CD14-positive monocyte (primary cell): ENCODE measurements at regions of chr11 and their contacts with region 1.

Region 1: GRCh38 chr11:47269002-47269828 is 718 bp upstream of the MADD start:
- DNase-seq: peak; percentile 88 to 91 (median 90)
- H3K4me3 ChIP-seq: peak overlapping the region; percentile 63 to 95 (median 80)
- H3K4me3 Mint-ChIP-seq: peak overlapping the region; percentile 83 to 93
- H3K27ac ChIP-seq: peak overlapping the region; percentile 96
- H3K27ac Mint-ChIP-seq: peak overlapping the region; percentile 96 to 100 (median 98)
- H3K4me1 ChIP-seq: peaks cover 53 to 58% of the 10 kb centered on the region in 2 donors
- H3K4me1 Mint-ChIP-seq: peaks cover 55% of the 10 kb centered on the region
- H3K27me3 ChIP-seq: no peaks in the 10 kb centered on the region
- H3K27me3 Mint-ChIP-seq: peaks cover 0 to 3% (median 1%) of the 10 kb centered on the region in 3 donors
- CTCF ChIP-seq: peak; percentile 23

Region 2: GRCh38 chr11:47176328-47177228 is 92.6 kb before region 1 on chr11 and contains the start of gene ARFGAP2:
- intact Hi-C with region 1: loop called (anchors 2 kb)
- DNase-seq: peak; percentile 93 to 96 (median 94)
- H3K4me3 ChIP-seq: peak within 1 kb of the TSS; percentile 77 to 94 (median 93)
- H3K4me3 Mint-ChIP-seq: peak within 1 kb of the TSS; percentile 95 to 98
- H3K27ac ChIP-seq: peak within 1 kb of the TSS; percentile 90 to 95
- H3K27ac Mint-ChIP-seq: peak within 1 kb of the TSS; percentile 96 to 99 (median 98)
- H3K4me1 ChIP-seq: peaks cover 24 to 29% of the 10 kb centered on the region in 2 donors
- H3K4me1 Mint-ChIP-seq: peaks cover 22% of the 10 kb centered on the region
- H3K27me3 ChIP-seq: no peaks in the 10 kb centered on the region
- H3K27me3 Mint-ChIP-seq: peaks cover 0 to 2% (median 1%) of the 10 kb centered on the region in 3 donors
- CTCF ChIP-seq: no peak
- polyA plus RNA-seq, gene ARFGAP2: 59.7 to 129 (median 61.0) TPM

Region 3: DNA sequence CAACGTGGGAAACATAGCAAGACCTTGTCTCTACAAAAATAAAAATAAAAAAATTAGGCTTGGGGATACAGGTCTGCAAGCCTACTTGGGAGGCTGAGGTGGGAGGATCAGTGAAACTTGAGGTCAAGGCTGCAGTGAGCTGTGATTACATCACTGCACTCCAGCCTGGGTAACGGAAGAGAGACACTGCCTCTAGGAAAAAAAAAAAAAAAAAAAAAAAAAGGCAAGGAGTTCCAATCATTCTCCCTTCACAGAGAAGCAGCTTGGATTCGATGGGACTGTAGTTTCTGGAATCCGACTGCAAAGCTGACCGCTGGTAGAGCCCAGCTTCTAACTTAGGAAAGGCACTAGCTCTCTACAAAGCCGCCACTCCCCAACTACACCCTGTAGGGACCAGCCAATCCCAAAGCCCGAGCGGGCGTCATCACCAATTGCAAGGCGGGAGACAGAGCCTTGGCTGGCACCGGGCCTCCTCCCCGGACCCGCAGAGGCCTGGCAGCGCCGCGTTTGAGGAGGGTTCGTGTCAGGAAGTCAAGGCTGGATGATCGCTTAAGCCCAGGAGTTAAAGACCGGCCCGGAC is 55.1 kb before region 1 on chr11:
- intact Hi-C with region 1: loop called (anchors 1 to 2 kb)
- DNase-seq: peak; percentile 84 to 89 (median 84)
- H3K4me3 ChIP-seq: peak overlapping the region; percentile 79 to 99 (median 81)
- H3K4me3 Mint-ChIP-seq: peak overlapping the region; percentile 98 to 100
- H3K27ac ChIP-seq: peak overlapping the region; percentile 90 to 93
- H3K27ac Mint-ChIP-seq: peak overlapping the region; percentile 97 to 100 (median 100)
- H3K4me1 ChIP-seq: peaks cover 15 to 29% of the 10 kb centered on the region in 2 donors
- H3K4me1 Mint-ChIP-seq: peaks cover 23% of the 10 kb centered on the region
- H3K27me3 ChIP-seq: no peaks in the 10 kb centered on the region
- H3K27me3 Mint-ChIP-seq: peaks cover 0 to 2% (median 0%) of the 10 kb centered on the region in 3 donors
- CTCF ChIP-seq: no peak

Region 4: GRCh38 chr11:47248664-47249377 is 20.4 kb before region 1 on chr11 and contains the start of gene ACP2:
- intact Hi-C with region 1: loop called in 1 of 2 experiments (anchors 1 kb)
- DNase-seq: peak; percentile 81 to 87 (median 84)
- H3K4me3 ChIP-seq: peak within 1 kb of the TSS; percentile 76 to 97 (median 95)
- H3K4me3 Mint-ChIP-seq: peak within 1 kb of the TSS; percentile 95 to 100
- H3K27ac ChIP-seq: peak within 1 kb of the TSS; percentile 61 to 92
- H3K27ac Mint-ChIP-seq: peak within 1 kb of the TSS; percentile 92 to 99 (median 98)
- H3K4me1 ChIP-seq: peaks cover 20 to 25% of the 10 kb centered on the region in 2 donors
- H3K4me1 Mint-ChIP-seq: peaks cover 26% of the 10 kb centered on the region
- H3K27me3 ChIP-seq: no peaks in the 10 kb centered on the region
- H3K27me3 Mint-ChIP-seq: no peaks in the 10 kb centered on the region
- CTCF ChIP-seq: no peak
- polyA plus RNA-seq, gene ACP2: 13.1 to 25.3 (median 20.5) TPM

Region 5: DNA sequence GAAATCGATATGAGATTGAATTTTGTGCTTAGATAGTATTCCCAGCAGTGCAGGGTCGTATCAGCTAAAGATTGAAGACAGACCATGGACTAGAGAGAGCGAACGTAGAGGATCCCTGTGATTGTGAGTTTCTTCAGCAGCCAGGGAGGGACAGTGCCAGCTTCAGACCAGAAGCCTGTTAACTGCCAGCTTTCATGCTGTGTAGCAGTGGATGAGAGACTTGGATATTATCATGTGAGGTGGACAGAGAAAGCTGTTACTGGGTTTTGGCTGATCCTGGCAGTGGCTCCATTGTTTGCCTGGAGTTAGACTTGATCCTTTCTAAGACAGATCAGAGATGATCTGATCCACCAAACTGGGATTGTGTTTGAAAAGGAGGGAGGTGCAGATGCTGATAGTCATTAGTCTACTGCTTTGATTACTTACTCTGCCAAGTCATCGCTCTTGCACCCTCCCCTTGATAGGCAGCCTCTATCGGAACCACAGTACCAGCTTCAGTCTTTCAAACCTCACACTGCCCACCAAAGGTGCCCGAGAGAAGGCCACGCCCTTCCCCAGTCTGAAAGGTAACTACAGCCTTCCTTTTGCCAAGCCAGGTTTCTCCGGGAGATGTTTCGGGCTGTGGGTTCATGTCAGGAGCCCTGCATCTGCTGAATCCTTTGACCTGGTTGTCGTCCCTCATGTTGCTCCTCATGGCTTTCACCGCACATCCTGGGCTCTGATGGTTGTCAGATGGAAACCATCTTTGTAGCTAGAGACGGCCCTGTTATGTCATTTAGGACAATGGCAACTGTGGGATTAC is 17.0 kb after region 1 on chr11:
- intact Hi-C with region 1: no loop called
- DNase-seq: no peak
- H3K4me3 ChIP-seq: no peak overlapping the region
- H3K4me3 Mint-ChIP-seq: no peak overlapping the region
- H3K27ac ChIP-seq: peak overlapping the region in 1 of 2 donors; percentile 8
- H3K27ac Mint-ChIP-seq: peak overlapping the region in 3 of 7 donors; percentile 20 to 62 (median 27)
- H3K4me1 ChIP-seq: no peaks in the 10 kb centered on the region
- H3K4me1 Mint-ChIP-seq: no peaks in the 10 kb centered on the region
- H3K27me3 ChIP-seq: no peaks in the 10 kb centered on the region
- H3K27me3 Mint-ChIP-seq: peaks cover 0 to 1% (median 0%) of the 10 kb centered on the region in 3 donors
- CTCF ChIP-seq: no peak

Region 6: GRCh38 chr11:47340980-47341775 is 72.0 kb after region 1 on chr11:
- intact Hi-C with region 1: no loop called
- DNase-seq: no peak
- H3K4me3 ChIP-seq: no peak overlapping the region
- H3K4me3 Mint-ChIP-seq: no peak overlapping the region
- H3K27ac ChIP-seq: no peak overlapping the region
- H3K27ac Mint-ChIP-seq: no peak overlapping the region
- H3K4me1 ChIP-seq: no peaks in the 10 kb centered on the region
- H3K4me1 Mint-ChIP-seq: no peaks in the 10 kb centered on the region
- H3K27me3 ChIP-seq: no peaks in the 10 kb centered on the region
- H3K27me3 Mint-ChIP-seq: peaks cover 0 to 3% (median 2%) of the 10 kb centered on the region in 3 donors
- CTCF ChIP-seq: no peak

Region 7: DNA sequence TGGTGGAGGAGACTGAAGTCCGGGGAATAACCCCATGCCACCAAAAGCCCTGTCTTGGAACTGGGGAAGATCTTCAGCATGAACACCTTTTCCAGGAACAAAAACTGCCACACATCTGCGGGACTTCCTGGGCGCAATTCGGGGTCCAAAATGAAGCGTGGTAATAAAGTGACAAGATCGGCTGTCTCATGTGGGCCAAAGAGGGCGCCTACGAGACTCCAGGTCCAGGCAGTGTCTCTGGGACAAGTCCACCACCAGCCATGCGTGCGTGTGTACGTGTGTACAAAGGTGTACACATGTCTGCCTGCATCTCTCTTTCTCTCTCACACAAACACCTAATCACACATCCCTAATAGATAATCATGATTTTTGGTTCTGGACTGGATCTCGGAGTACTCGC is 92.2 kb after region 1 on chr11:
- intact Hi-C with region 1: loop called in 1 of 2 experiments (anchors 10 kb)
- DNase-seq: no peak
- H3K4me3 ChIP-seq: peak overlapping the region in 1 of 3 experiments; percentile 12
- H3K4me3 Mint-ChIP-seq: peak overlapping the region in 1 of 2 donors; percentile 76
- H3K27ac ChIP-seq: peak overlapping the region; percentile 57 to 71
- H3K27ac Mint-ChIP-seq: peak overlapping the region in 6 of 7 donors; percentile 83 to 96 (median 93)
- H3K4me1 ChIP-seq: peaks cover 74 to 80% of the 10 kb centered on the region in 2 donors
- H3K4me1 Mint-ChIP-seq: peaks cover 64% of the 10 kb centered on the region
- H3K27me3 ChIP-seq: no peaks in the 10 kb centered on the region
- H3K27me3 Mint-ChIP-seq: no peaks in the 10 kb centered on the region
- CTCF ChIP-seq: no peak

Region 8: GRCh38 chr11:47426061-47426956 is 157.1 kb after region 1 on chr11 and contains the start of gene PSMC3:
- intact Hi-C with region 1: loop called in 1 of 2 experiments (anchors 5 kb)
- DNase-seq: peak; percentile 92 to 96 (median 94)
- H3K4me3 ChIP-seq: peak within 1 kb of the TSS; percentile 89 to 99 (median 96)
- H3K4me3 Mint-ChIP-seq: peak within 1 kb of the TSS; percentile 99
- H3K27ac ChIP-seq: peak within 1 kb of the TSS; percentile 61 to 95
- H3K27ac Mint-ChIP-seq: peak within 1 kb of the TSS; percentile 90 to 99 (median 97)
- H3K4me1 ChIP-seq: peaks cover 13 to 20% of the 10 kb centered on the region in 2 donors
- H3K4me1 Mint-ChIP-seq: peaks cover 15% of the 10 kb centered on the region
- H3K27me3 ChIP-seq: no peaks in the 10 kb centered on the region
- H3K27me3 Mint-ChIP-seq: peaks cover 0 to 4% (median 1%) of the 10 kb centered on the region in 3 donors
- CTCF ChIP-seq: no peak
- polyA plus RNA-seq, gene PSMC3: 44.1 to 97.4 (median 89.5) TPM